WTC11 (cell line): ENCODE measurements at regions of chr3 and their contacts with region 1.

Region 1: DNA sequence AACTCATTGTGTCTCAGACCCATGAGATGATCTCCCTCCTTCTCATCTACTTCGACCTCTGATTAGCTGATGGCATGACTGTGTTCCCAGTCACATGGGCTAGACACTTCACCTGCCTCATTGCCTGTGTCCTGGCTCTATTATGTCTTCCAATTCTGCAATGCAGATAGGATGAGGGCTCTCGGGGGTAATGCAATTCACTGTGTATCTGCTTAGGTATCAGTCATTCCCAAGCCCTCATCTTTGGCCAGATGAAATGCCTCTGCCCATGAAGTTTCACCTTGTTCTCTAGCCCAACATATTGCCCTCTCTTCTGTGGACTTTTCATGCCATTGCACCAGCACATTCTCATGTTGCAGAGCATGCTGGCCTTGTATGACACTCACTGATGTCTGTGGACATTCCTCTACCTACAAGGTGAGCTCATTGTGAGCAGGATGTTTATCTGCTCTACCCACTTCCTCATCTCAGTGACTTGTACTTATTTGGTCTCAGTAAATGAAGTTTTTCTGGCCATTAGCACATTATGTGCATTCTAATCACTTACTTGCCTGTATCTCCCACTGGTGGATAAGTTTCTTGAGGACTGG is 32.3 kb downstream of the MOBP start:
- DNase-seq: no peak
- ATAC-seq: no peak
- H3K4me3 Mint-ChIP-seq: no peak overlapping the region
- H3K27ac Mint-ChIP-seq: no peak overlapping the region
- H3K4me1 Mint-ChIP-seq: peaks cover 9% of the 10 kb centered on the region
- H3K27me3 Mint-ChIP-seq: peaks cover 17% of the 10 kb centered on the region
- CTCF ChIP-seq: no peak

Region 2: GRCh38 chr3:39414421-39414907 is 85.3 kb before region 1 on chr3:
- CTCF ChIA-PET with region 1: interaction called, 17 read pairs
- POLR2A ChIA-PET with region 1: no interaction called
- DNase-seq: no peak
- ATAC-seq: peak; percentile 6
- H3K4me3 Mint-ChIP-seq: no peak overlapping the region
- H3K27ac Mint-ChIP-seq: peak overlapping the region; percentile 77
- H3K4me1 Mint-ChIP-seq: peaks cover 30% of the 10 kb centered on the region
- H3K27me3 Mint-ChIP-seq: no peaks in the 10 kb centered on the region
- CTCF ChIP-seq: no peak

Region 3: GRCh38 chr3:39447637-39448483 is 51.9 kb before region 1 on chr3:
- CTCF ChIA-PET with region 1: interaction called, 54 read pairs
- POLR2A ChIA-PET with region 1: no interaction called
- DNase-seq: peak; percentile 74
- ATAC-seq: peak; percentile 86
- H3K4me3 Mint-ChIP-seq: no peak overlapping the region
- H3K27ac Mint-ChIP-seq: no peak overlapping the region
- H3K4me1 Mint-ChIP-seq: peaks cover 12% of the 10 kb centered on the region
- H3K27me3 Mint-ChIP-seq: no peaks in the 10 kb centered on the region
- CTCF ChIP-seq: peak; percentile 72

Region 4: GRCh38 chr3:39485547-39485946 is 14.2 kb before region 1 on chr3:
- CTCF ChIA-PET with region 1: interaction called, 15 read pairs
- POLR2A ChIA-PET with region 1: no interaction called
- DNase-seq: no peak
- ATAC-seq: peak; percentile 62
- H3K4me3 Mint-ChIP-seq: no peak overlapping the region
- H3K27ac Mint-ChIP-seq: no peak overlapping the region
- H3K4me1 Mint-ChIP-seq: no peaks in the 10 kb centered on the region
- H3K27me3 Mint-ChIP-seq: no peaks in the 10 kb centered on the region; the same call in 1 of the 2 replicates
- CTCF ChIP-seq: no peak

Region 5: DNA sequence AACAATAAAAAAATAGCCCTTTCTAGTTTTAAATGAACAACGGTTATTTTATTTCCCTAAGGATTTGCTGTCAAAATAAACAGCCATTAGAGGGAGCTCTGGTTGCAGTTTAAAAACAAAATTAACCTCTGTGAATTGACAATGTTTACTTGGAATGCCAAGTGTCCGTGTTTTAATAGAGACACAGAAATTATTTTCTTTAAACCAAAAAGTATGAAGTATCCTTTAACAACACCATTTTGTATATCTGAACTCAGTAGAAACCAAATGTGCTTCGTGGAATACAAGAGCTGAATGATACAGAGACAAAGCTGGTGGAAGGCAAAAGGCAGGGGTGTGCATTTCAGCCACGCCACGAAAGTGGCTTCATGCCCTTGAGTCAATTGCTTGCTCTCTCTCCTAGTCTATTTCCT is 42.2 kb after region 1 on chr3:
- CTCF ChIA-PET with region 1: interaction called, 10 read pairs
- POLR2A ChIA-PET with region 1: no interaction called
- DNase-seq: no peak
- ATAC-seq: peak; percentile 41
- H3K4me3 Mint-ChIP-seq: no peak overlapping the region
- H3K27ac Mint-ChIP-seq: no peak overlapping the region
- H3K4me1 Mint-ChIP-seq: peaks cover 23% of the 10 kb centered on the region
- H3K27me3 Mint-ChIP-seq: no peaks in the 10 kb centered on the region; the same call in 1 of the 2 replicates
- CTCF ChIP-seq: peak; percentile 25; the same call in 1 of the 2 replicates